CD8-positive, alpha-beta memory T cell (primary cell): ENCODE measurements at regions of chr6 and their contacts with region 1.

Region 1: DNA sequence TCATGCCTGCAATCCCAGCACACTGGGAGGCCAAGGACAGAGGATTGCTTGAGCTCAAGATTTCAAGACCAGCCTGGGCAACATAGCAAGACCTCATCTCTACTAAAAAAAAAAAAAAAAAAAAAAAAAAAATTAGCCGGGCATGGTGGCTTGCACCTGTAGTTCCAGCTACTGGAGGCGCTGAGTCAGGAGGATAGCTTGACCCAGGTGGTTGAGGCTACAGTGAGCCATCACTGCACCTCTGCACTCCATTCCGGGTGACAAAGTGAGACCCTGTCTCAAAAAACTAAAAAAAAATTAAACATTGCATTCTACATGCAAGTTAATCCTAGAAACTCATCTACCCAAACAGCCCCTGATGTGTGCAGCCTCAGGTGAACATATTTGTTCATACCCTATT is 7.3 kb upstream of the TRAM2 start:
- DNase-seq: no peak
- H3K4me3 ChIP-seq: no peak overlapping the region
- H3K4me3 Mint-ChIP-seq: no peak overlapping the region
- H3K27ac ChIP-seq: no peak overlapping the region
- H3K27ac Mint-ChIP-seq: no peak overlapping the region
- H3K4me1 ChIP-seq: no peaks in the 10 kb centered on the region
- H3K4me1 Mint-ChIP-seq: no peaks in the 10 kb centered on the region
- H3K27me3 ChIP-seq: no peaks in the 10 kb centered on the region
- H3K27me3 Mint-ChIP-seq: no peaks in the 10 kb centered on the region

Region 2: DNA sequence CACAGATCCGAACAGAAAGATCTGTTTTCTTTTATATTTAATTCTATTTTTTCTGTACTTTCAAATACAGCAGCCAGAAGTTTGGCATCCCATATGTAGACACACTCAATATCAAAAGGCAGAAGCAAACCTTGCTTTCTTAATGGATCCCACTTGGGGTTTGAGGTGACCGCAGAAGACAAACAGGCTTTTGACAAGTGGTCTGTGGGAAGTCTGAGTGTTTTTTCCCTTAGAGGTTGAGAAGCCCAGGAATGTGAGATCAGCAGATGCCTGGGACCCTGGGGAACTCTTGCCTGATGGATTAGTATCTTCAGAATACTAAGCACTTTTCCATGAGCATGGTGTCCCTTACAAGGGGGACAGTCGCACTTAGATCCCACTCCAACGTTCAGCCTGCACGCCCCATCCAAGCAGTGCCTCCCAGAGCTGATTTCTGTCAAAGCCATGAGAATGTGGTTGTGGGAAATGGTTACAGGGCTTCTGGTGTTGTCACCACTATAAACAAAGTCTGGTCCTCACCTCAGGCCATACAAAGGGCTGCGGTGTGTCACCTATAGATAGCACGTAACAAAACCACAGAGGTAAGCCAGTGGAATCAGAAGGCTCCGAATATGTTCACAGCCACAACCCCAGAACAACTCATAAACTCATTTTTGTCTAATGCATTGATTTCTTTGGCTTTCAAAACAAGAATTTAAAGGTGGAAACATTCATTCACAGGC is 352.6 kb before region 1 on chr6:
- CTCF ChIA-PET with region 1: no interaction called
- POLR2A ChIA-PET with region 1: interaction called, 14 read pairs
- DNase-seq: peak in 3 of 5 donors; percentile 4 to 64 (median 56)
- H3K4me3 ChIP-seq: no peak overlapping the region
- H3K4me3 Mint-ChIP-seq: peak overlapping the region in 1 of 7 donors; percentile 45
- H3K27ac ChIP-seq: no peak overlapping the region
- H3K27ac Mint-ChIP-seq: peak overlapping the region in 4 of 8 donors; percentile 1 to 55 (median 32)
- H3K4me1 ChIP-seq: no peaks in the 10 kb centered on the region
- H3K4me1 Mint-ChIP-seq: peaks cover 6 to 25% (median 19%) of the 10 kb centered on the region in 3 donors
- H3K27me3 ChIP-seq: peaks cover 26% of the 10 kb centered on the region
- H3K27me3 Mint-ChIP-seq: peaks cover 23 to 54% of the 10 kb centered on the region in 2 donors

Region 3: DNA sequence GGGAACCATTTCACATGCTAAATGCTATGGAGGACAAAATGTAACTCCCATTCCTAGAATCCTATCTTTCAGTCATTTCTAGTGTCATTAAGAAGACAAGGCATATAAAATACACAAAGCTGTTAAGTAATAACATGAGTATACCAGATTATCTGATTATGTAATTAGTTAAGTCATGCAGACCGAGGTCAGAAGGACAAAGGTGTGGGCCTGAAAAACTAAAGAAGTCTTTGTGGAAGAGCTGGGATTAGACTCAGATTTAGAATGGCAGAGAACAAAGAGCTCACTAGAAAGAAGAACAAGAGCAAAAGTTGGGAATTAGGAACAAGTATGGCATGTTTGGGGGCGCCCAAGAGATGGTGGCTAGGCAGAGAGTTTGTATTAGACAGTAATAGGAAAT is 127.1 kb before region 1 on chr6:
- CTCF ChIA-PET with region 1: no interaction called
- POLR2A ChIA-PET with region 1: no interaction called
- DNase-seq: no peak
- H3K4me3 ChIP-seq: no peak overlapping the region
- H3K4me3 Mint-ChIP-seq: no peak overlapping the region
- H3K27ac ChIP-seq: no peak overlapping the region
- H3K27ac Mint-ChIP-seq: no peak overlapping the region
- H3K4me1 ChIP-seq: no peaks in the 10 kb centered on the region
- H3K4me1 Mint-ChIP-seq: no peaks in the 10 kb centered on the region
- H3K27me3 ChIP-seq: no peaks in the 10 kb centered on the region
- H3K27me3 Mint-ChIP-seq: peaks cover 0 to 4% of the 10 kb centered on the region in 2 donors

Region 4: GRCh38 chr6:52749556-52750152 is 165.5 kb after region 1 on chr6:
- CTCF ChIA-PET with region 1: no interaction called
- POLR2A ChIA-PET with region 1: no interaction called
- DNase-seq: no peak
- H3K4me3 ChIP-seq: no peak overlapping the region
- H3K4me3 Mint-ChIP-seq: no peak overlapping the region
- H3K27ac ChIP-seq: no peak overlapping the region
- H3K27ac Mint-ChIP-seq: no peak overlapping the region
- H3K4me1 ChIP-seq: no peaks in the 10 kb centered on the region
- H3K4me1 Mint-ChIP-seq: no peaks in the 10 kb centered on the region
- H3K27me3 ChIP-seq: no peaks in the 10 kb centered on the region
- H3K27me3 Mint-ChIP-seq: peaks cover 11 to 36% of the 10 kb centered on the region in 2 donors